GM12878 (cell line): ENCODE measurements at regions of chr16 and their contacts with region 1.

Region 1: GRCh38 chr16:12896562-12896961 is 4.8 kb upstream of the SHISA9 start:
- DNase-seq: no peak
- ATAC-seq: peak; percentile 89
- H3K4me3 ChIP-seq: no peak overlapping the region
- H3K27ac ChIP-seq: no peak overlapping the region
- H3K4me1 ChIP-seq: no peaks in the 10 kb centered on the region
- H3K27me3 ChIP-seq: peaks cover 0 to 9% of the 10 kb centered on the region in 2 experiments; a peak in 3 of 4 replicates
- CTCF ChIP-seq: peak; percentile 61 to 63 (median 63)
- EP300 ChIP-seq: no peak
- POLR2A ChIP-seq: no peak
- RAD21 ChIP-seq: peak; percentile 88

Region 2: GRCh38 chr16:12455287-12455798 is 441.2 kb before region 1 on chr16:
- CTCF ChIA-PET with region 1: interaction called, 4 read pairs
- POLR2A ChIA-PET with region 1: no interaction called
- RAD21 ChIA-PET with region 1: no interaction called
- SMC1A ChIA-PET with region 1: no interaction called
- in situ Hi-C with region 1: no loop called
- intact Hi-C with region 1: loop called (anchors 5 kb)
- DNase-seq: no peak
- ATAC-seq: peak; percentile 90
- H3K4me3 ChIP-seq: no peak overlapping the region
- H3K27ac ChIP-seq: no peak overlapping the region
- H3K4me1 ChIP-seq: peaks cover 14% of the 10 kb centered on the region
- H3K27me3 ChIP-seq: no peaks in the 10 kb centered on the region
- CTCF ChIP-seq: peak; percentile 72 to 88 (median 83)
- EP300 ChIP-seq: no peak
- POLR2A ChIP-seq: no peak
- RAD21 ChIP-seq: peak; percentile 75

Region 3: GRCh38 chr16:12971241-12971640 is 74.7 kb after region 1 on chr16:
- CTCF ChIA-PET with region 1: no interaction called
- POLR2A ChIA-PET with region 1: no interaction called
- RAD21 ChIA-PET with region 1: no interaction called
- SMC1A ChIA-PET with region 1: no interaction called
- in situ Hi-C with region 1: no loop called
- intact Hi-C with region 1: no loop called
- DNase-seq: no peak
- ATAC-seq: no peak
- H3K4me3 ChIP-seq: no peak overlapping the region
- H3K27ac ChIP-seq: no peak overlapping the region
- H3K4me1 ChIP-seq: no peaks in the 10 kb centered on the region
- H3K27me3 ChIP-seq: no peaks in the 10 kb centered on the region
- CTCF ChIP-seq: no peak
- EP300 ChIP-seq: no peak
- POLR2A ChIP-seq: no peak
- RAD21 ChIP-seq: no peak

Region 4: GRCh38 chr16:13110124-13110796 is 213.7 kb after region 1 on chr16:
- CTCF ChIA-PET with region 1: interaction called, 7 read pairs
- POLR2A ChIA-PET with region 1: no interaction called
- RAD21 ChIA-PET with region 1: interaction called, 4 read pairs
- SMC1A ChIA-PET with region 1: interaction called, 16 read pairs
- in situ Hi-C with region 1: no loop called
- intact Hi-C with region 1: no loop called
- DNase-seq: no peak
- ATAC-seq: no peak
- H3K4me3 ChIP-seq: no peak overlapping the region
- H3K27ac ChIP-seq: no peak overlapping the region
- H3K4me1 ChIP-seq: no peaks in the 10 kb centered on the region
- H3K27me3 ChIP-seq: no peaks in the 10 kb centered on the region
- CTCF ChIP-seq: no peak
- EP300 ChIP-seq: no peak
- POLR2A ChIP-seq: no peak
- RAD21 ChIP-seq: no peak

Region 5: GRCh38 chr16:13148294-13148693 is 251.7 kb after region 1 on chr16:
- CTCF ChIA-PET with region 1: interaction called, 6 read pairs
- POLR2A ChIA-PET with region 1: no interaction called
- RAD21 ChIA-PET with region 1: no interaction called
- SMC1A ChIA-PET with region 1: interaction called, 10 read pairs
- in situ Hi-C with region 1: no loop called
- intact Hi-C with region 1: no loop called
- DNase-seq: no peak
- ATAC-seq: peak; percentile 46
- H3K4me3 ChIP-seq: no peak overlapping the region
- H3K27ac ChIP-seq: no peak overlapping the region
- H3K4me1 ChIP-seq: no peaks in the 10 kb centered on the region
- H3K27me3 ChIP-seq: no peaks in the 10 kb centered on the region
- CTCF ChIP-seq: no peak
- EP300 ChIP-seq: no peak
- POLR2A ChIP-seq: no peak
- RAD21 ChIP-seq: no peak

Region 6: DNA sequence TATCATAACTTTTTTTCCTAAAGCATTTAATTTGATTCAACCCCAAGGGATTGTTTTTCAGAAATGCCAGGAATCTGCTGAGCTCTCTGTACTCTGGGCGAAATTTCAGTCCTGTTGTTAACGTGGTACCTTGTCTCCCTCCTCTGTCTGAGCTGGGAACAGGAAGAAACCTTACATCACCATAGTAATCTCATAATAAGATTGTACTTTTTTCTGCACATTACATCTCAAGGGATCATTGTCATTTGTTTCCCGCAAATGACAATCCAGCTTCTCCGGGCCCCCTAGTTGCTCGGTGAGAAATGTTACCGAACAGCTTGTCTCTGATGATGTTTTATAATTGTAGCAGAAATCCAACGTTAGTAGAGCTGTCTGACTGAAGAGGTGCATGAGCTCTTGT is 870.7 kb after region 1 on chr16:
- CTCF ChIA-PET with region 1: interaction called, 27 read pairs
- POLR2A ChIA-PET with region 1: no interaction called
- RAD21 ChIA-PET with region 1: interaction called, 42 read pairs
- SMC1A ChIA-PET with region 1: interaction called, 14 read pairs
- in situ Hi-C with region 1: no loop called
- intact Hi-C with region 1: no loop called
- DNase-seq: no peak
- ATAC-seq: peak; percentile 42; the same call in 2 of the 3 replicates
- H3K4me3 ChIP-seq: no peak overlapping the region
- H3K27ac ChIP-seq: no peak overlapping the region
- H3K4me1 ChIP-seq: no peaks in the 10 kb centered on the region
- H3K27me3 ChIP-seq: no peaks in the 10 kb centered on the region
- CTCF ChIP-seq: peak; percentile 10 to 42 (median 28); a peak in 3 of 6 replicates
- EP300 ChIP-seq: no peak
- POLR2A ChIP-seq: no peak
- RAD21 ChIP-seq: peak; percentile 58